CD8-positive, alpha-beta T cell (primary cell): ENCODE measurements at regions of chr3 and their contacts with region 1.

Region 1: GRCh38 chr3:42961633-42962032 is 17.5 kb upstream of the GASK1A start:
- DNase-seq: peak in 4 of 9 experiments; percentile 24 to 65 (median 42)
- ATAC-seq: no peak
- H3K4me3 ChIP-seq: no peak overlapping the region
- H3K4me3 Mint-ChIP-seq: no peak overlapping the region
- H3K27ac ChIP-seq: no peak overlapping the region
- H3K27ac Mint-ChIP-seq: no peak overlapping the region
- H3K4me1 ChIP-seq: peaks cover 20% of the 10 kb centered on the region
- H3K4me1 Mint-ChIP-seq: peaks cover 29% of the 10 kb centered on the region
- H3K27me3 ChIP-seq: no peaks in the 10 kb centered on the region
- H3K27me3 Mint-ChIP-seq: no peaks in the 10 kb centered on the region
- CTCF ChIP-seq: peak; percentile 53

Region 2: DNA sequence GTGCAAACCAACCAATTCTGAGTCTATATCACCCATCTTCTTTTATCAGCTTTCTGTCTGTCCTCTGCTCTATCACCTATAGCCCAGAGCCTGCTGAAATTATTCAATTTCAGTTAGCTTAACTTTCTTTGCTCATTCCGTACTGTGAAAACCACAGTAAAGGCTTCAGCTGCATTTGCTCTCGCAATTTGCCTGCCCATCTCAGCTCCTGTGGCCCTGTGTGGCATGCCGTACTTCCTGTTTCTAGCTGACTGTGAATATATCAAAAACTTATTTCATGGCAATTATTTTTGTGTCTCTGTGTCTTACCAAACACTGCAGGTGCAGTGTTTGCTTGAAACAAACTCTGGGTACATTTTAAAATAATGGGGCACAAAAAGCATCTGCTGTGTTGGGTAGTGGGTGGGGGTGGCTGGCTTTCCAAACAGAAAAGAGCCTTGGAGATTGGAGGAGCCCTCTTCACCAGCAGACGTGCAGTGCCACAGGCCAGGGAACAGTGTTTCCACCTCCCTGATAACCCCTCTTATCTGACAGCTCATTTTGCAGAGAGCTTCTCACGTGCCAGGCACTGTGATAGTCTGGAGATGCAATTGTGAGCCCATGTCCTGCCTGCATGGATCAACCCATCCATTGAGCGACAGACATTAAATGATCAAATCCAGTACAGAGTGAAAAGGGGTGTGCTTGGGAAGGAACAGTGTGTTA is 62.7 kb after region 1 on chr3:
- CTCF ChIA-PET with region 1: interaction called, 11 read pairs
- POLR2A ChIA-PET with region 1: interaction called, 5 read pairs
- intact Hi-C with region 1: loop called in 1 of 2 experiments (anchors 1 kb)
- DNase-seq: peak in 7 of 9 experiments; percentile 39 to 82 (median 72)
- ATAC-seq: peak; percentile 91
- H3K4me3 ChIP-seq: peak overlapping the region; percentile 0 to 20
- H3K4me3 Mint-ChIP-seq: peak overlapping the region; percentile 74
- H3K27ac ChIP-seq: peak overlapping the region; percentile 25 to 56
- H3K27ac Mint-ChIP-seq: peak overlapping the region; percentile 95
- H3K4me1 ChIP-seq: peaks cover 69% of the 10 kb centered on the region
- H3K4me1 Mint-ChIP-seq: peaks cover 79% of the 10 kb centered on the region
- H3K27me3 ChIP-seq: no peaks in the 10 kb centered on the region
- H3K27me3 Mint-ChIP-seq: no peaks in the 10 kb centered on the region
- CTCF ChIP-seq: no peak

Region 3: GRCh38 chr3:43076857-43077256 is 115.2 kb after region 1 on chr3:
- CTCF ChIA-PET with region 1: interaction called, 84 read pairs
- POLR2A ChIA-PET with region 1: interaction called, 4 read pairs
- intact Hi-C with region 1: loop called in 1 of 2 experiments (anchors 5 kb)
- DNase-seq: no peak
- ATAC-seq: no peak
- H3K4me3 ChIP-seq: no peak overlapping the region
- H3K4me3 Mint-ChIP-seq: no peak overlapping the region
- H3K27ac ChIP-seq: no peak overlapping the region
- H3K27ac Mint-ChIP-seq: no peak overlapping the region
- H3K4me1 ChIP-seq: no peaks in the 10 kb centered on the region
- H3K4me1 Mint-ChIP-seq: no peaks in the 10 kb centered on the region
- H3K27me3 ChIP-seq: no peaks in the 10 kb centered on the region
- H3K27me3 Mint-ChIP-seq: no peaks in the 10 kb centered on the region
- CTCF ChIP-seq: no peak

Region 4: DNA sequence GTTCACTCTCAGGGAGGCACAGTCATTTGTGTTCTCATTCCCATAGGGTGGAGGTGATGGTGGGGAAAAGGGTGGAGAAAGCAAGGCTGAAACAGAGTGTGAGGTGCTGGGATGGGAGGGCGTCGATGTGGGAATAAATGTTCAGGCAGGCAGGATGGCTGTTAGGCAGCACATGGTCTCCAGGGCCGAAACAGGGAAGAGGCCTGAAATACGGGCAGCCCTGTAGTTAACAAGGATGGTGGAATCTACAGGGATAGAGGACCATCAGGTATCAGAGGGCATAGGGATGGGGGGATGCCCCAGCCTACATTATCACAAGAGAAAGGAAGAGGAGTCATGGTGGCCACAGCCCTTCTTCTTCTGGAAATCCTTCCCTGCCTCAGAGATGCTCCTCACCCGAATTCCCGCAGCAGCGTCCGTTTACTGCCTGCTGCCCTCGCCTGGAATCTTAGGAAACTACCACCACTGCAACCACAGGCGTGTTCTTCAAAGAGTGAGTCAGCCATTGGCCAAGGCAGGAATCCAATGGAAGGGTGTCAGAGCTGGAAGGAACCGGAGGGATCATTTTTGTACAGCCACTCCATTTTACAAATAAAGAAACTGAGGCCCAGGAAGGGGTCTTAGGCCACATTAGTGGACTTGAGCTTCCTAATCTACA is 194.0 kb after region 1 on chr3:
- CTCF ChIA-PET with region 1: interaction called, 37 read pairs
- POLR2A ChIA-PET with region 1: no interaction called
- intact Hi-C with region 1: no loop called
- DNase-seq: no peak
- ATAC-seq: no peak
- H3K4me3 ChIP-seq: no peak overlapping the region
- H3K4me3 Mint-ChIP-seq: peak overlapping the region; percentile 0
- H3K27ac ChIP-seq: no peak overlapping the region
- H3K27ac Mint-ChIP-seq: peak overlapping the region; percentile 83
- H3K4me1 ChIP-seq: peaks cover 15% of the 10 kb centered on the region
- H3K4me1 Mint-ChIP-seq: peaks cover 36% of the 10 kb centered on the region
- H3K27me3 ChIP-seq: no peaks in the 10 kb centered on the region
- H3K27me3 Mint-ChIP-seq: peaks cover 2% of the 10 kb centered on the region
- CTCF ChIP-seq: no peak

Region 5: GRCh38 chr3:43246976-43247375 is 285.3 kb after region 1 on chr3:
- CTCF ChIA-PET with region 1: no interaction called
- POLR2A ChIA-PET with region 1: no interaction called
- intact Hi-C with region 1: no loop called
- DNase-seq: peak in 3 of 9 experiments; percentile 25 to 66 (median 45)
- ATAC-seq: peak; percentile 56
- H3K4me3 ChIP-seq: no peak overlapping the region
- H3K4me3 Mint-ChIP-seq: peak overlapping the region; percentile 53
- H3K27ac ChIP-seq: peak overlapping the region in 1 of 2 experiments; percentile 42
- H3K27ac Mint-ChIP-seq: peak overlapping the region; percentile 86
- H3K4me1 ChIP-seq: peaks cover 50% of the 10 kb centered on the region
- H3K4me1 Mint-ChIP-seq: peaks cover 64% of the 10 kb centered on the region
- H3K27me3 ChIP-seq: no peaks in the 10 kb centered on the region
- H3K27me3 Mint-ChIP-seq: no peaks in the 10 kb centered on the region
- CTCF ChIP-seq: no peak

Region 6: DNA sequence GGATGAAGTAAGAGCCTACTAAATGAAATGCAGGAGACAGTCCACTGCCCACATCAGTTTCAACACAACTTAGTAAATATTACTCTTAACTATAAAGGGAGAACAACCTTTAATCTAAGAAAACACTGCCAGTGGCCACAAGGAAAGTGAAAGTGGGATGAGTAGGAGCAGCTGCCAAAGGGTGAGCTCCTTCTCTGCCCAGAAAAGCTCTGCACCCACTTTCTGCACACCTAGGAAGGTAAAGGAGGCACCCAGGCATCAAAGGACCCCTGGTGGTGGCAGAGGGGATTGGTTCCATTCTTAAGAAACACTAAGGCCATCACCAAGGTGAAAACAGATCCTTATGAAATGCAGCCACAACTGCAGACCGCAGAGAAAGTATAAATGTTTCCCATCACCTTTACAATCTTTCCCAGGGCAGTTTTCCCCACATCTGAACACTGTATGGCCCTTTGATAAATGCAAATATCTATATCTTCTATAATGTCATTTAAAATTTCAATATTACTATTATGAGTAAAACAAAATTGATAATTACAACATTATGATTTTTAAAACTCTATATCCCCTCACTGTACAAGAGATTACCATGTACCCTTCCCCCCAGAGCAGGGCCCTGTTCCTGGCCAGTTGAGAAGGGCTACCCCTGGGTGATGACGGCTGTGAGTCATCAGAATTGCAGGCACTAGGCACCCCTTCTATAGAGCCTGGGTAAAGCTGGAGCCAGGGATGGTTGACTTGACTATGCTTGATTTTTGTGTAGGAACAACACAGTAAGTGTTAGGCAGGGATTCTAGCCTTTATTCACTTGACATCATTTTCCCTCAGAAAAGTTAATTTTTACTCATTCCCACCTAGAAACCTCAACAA is 416.7 kb after region 1 on chr3:
- CTCF ChIA-PET with region 1: interaction called, 9 read pairs
- POLR2A ChIA-PET with region 1: no interaction called
- intact Hi-C with region 1: loop called in 1 of 2 experiments (anchors 1 kb)
- DNase-seq: peak; percentile 54 to 87 (median 78)
- ATAC-seq: peak; percentile 99
- H3K4me3 ChIP-seq: no peak overlapping the region
- H3K4me3 Mint-ChIP-seq: no peak overlapping the region
- H3K27ac ChIP-seq: no peak overlapping the region
- H3K27ac Mint-ChIP-seq: peak overlapping the region; percentile 72
- H3K4me1 ChIP-seq: peaks cover 16% of the 10 kb centered on the region
- H3K4me1 Mint-ChIP-seq: peaks cover 31% of the 10 kb centered on the region
- H3K27me3 ChIP-seq: no peaks in the 10 kb centered on the region
- H3K27me3 Mint-ChIP-seq: no peaks in the 10 kb centered on the region
- CTCF ChIP-seq: peak; percentile 79

Region 7: GRCh38 chr3:44208086-44208485 is 1246.5 kb after region 1 on chr3:
- CTCF ChIA-PET with region 1: no interaction called
- POLR2A ChIA-PET with region 1: no interaction called
- intact Hi-C with region 1: loop called in 1 of 2 experiments (anchors 10 kb)
- DNase-seq: peak in 2 of 9 experiments; percentile 28 to 62
- ATAC-seq: peak; percentile 81
- H3K4me3 ChIP-seq: no peak overlapping the region
- H3K4me3 Mint-ChIP-seq: peak overlapping the region; percentile 2
- H3K27ac ChIP-seq: no peak overlapping the region
- H3K27ac Mint-ChIP-seq: no peak overlapping the region
- H3K4me1 ChIP-seq: peaks cover 20% of the 10 kb centered on the region
- H3K4me1 Mint-ChIP-seq: peaks cover 24% of the 10 kb centered on the region
- H3K27me3 ChIP-seq: peaks cover 0 to 3% of the 10 kb centered on the region in 2 experiments
- H3K27me3 Mint-ChIP-seq: peaks cover 53% of the 10 kb centered on the region
- CTCF ChIP-seq: no peak